Upper lobe of right lung (tissue), 1 donor: ENCODE measurements at regions of chr16 and their contacts with region 1.

Region 1: DNA sequence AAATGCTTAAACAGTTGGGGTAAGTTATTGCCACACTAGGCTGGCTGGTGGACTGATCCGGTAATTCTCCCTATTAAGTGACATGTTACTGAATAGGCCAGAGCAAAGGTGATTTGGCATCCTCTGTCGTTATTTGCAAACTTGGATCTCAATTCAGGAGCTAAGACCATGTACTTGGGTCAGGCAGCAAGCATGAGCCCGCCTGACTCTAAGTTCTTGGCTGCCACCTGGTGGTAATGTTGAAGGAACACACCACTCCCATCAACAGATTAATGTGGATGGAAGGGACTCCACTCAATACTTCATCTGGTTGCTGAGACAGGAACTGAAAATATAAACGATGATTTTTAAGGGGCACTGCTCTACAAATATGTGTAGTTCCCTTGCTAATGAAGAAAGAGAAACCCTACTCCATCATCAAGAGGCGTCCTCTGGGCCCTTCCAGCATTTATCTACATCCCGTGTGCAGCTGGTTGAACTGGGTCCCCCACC is 70.8 kb downstream of the EMP2 start:
- DNase-seq: no peak
- ATAC-seq: peak; percentile 93
- H3K4me3 ChIP-seq: no peak overlapping the region
- H3K27ac ChIP-seq: no peak overlapping the region
- H3K4me1 ChIP-seq: no peaks in the 10 kb centered on the region
- H3K27me3 ChIP-seq: no peaks in the 10 kb centered on the region
- CTCF ChIP-seq: peak; percentile 80

Region 2: DNA sequence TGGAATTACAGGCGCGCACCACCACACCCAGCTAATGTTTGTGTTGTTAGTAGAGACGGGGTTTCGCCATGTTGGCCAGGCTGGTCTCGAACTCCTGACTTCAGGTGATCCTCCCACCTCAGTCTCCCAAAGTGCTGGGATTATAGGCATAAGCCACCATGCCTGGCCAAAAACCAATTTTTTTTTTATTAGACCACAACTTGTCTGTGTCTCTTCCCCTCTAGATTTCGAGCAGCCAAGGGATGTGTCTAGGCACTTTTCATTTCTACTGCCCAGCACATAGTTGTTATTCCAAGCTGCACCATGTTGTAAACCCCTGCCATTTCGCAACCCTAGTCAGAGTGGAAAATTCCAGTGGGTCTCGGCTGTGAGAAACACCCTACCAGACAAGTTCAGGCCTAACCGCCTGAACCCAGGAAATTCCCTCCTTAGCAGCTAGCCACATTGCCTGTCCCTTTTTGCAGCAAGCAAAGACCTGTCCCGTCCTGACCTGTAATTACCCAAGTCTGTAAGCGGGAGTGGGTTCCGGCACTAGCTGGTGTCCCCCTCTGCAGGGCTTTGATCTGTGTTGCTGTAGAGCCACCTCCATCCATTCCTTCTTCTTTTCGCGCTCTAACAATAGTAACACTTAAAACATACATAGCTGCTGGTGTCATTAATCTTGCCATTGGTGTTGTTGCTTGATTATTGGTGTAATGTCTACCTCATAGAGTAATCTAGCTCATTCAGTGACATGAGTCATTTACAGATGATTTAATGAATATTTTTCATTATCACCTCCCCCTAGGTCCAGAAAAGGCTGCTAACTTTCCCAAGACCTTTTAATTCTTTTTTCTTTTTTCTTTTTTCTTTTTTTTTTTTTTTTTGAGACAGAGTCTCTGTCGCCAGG is 201.0 kb before region 1 on chr16:
- intact Hi-C with region 1: loop called (anchors 5 kb)
- DNase-seq: no peak
- ATAC-seq: no peak
- H3K4me3 ChIP-seq: no peak overlapping the region
- H3K27ac ChIP-seq: no peak overlapping the region
- H3K4me1 ChIP-seq: no peaks in the 10 kb centered on the region
- H3K27me3 ChIP-seq: no peaks in the 10 kb centered on the region
- CTCF ChIP-seq: no peak